ENCODE measurements at regions of chr9 and their contacts with region 1.

Region 1: GRCh38 chr9:89602978-89603766 is 1.6 kb upstream of the GADD45G start:
- DNase-seq: peak; percentile 32
- ATAC-seq: peak; percentile 76
- H3K4me3 ChIP-seq: peak overlapping the region; percentile 45; the same call in 1 of the 2 replicates
- H3K27ac ChIP-seq: no peak overlapping the region
- H3K4me1 ChIP-seq: peaks cover 25% of the 10 kb centered on the region
- H3K27me3 ChIP-seq: peaks cover 8 to 16% of the 10 kb centered on the region in 2 experiments
- CTCF ChIP-seq: peak; percentile 93 to 95 (median 93)
- EP300 ChIP-seq: no peak
- POLR2A ChIP-seq: no peak
- RAD21 ChIP-seq: peak; percentile 100

Region 2: DNA sequence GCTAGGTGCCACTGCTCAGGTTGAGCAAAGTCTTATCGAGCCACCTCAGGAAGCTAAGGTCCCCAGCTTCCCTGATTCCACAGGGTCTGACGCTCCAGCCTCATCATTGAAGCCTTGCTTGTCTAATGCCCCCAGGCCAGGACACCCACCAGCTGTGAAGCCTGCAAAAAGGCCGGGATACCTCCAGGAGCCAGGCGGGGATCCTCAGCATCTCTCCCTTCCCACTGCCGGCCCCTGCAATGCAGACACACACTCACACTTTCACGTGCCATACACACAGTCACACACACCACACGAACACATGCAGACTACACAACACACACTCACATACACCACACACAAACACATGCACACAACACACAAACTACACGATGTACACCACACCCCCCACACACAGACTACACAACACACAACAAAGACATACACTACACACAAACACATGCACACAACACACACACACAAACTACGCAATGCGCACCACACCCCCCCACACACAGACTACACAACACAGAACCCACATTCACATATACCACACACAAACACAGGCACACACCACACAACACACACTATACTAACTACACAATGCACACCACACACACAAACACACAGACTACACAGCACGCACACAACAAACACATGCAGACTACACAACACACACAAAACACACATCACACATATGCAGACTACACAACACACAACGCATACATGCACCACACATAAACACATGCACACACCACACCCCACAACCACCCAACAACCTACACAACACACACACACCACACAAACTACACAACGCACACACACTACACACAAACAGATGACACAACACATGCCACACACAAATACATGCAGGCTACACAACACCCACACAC is 629.7 kb before region 1 on chr9:
- CTCF ChIA-PET with region 1: no interaction called
- POLR2A ChIA-PET with region 1: no interaction called
- RAD21 ChIA-PET with region 1: no interaction called
- SMC1A ChIA-PET with region 1: no interaction called
- in situ Hi-C with region 1: no loop called
- intact Hi-C with region 1: no loop called
- DNase-seq: no peak
- ATAC-seq: no peak
- H3K4me3 ChIP-seq: no peak overlapping the region
- H3K27ac ChIP-seq: no peak overlapping the region
- H3K4me1 ChIP-seq: no peaks in the 10 kb centered on the region
- H3K27me3 ChIP-seq: no peaks in the 10 kb centered on the region; a peak in 1 of 4 replicates
- CTCF ChIP-seq: no peak
- EP300 ChIP-seq: no peak
- POLR2A ChIP-seq: no peak
- RAD21 ChIP-seq: no peak

Region 3: GRCh38 chr9:89466451-89467277 is 136.5 kb before region 1 on chr9:
- CTCF ChIA-PET with region 1: no interaction called
- POLR2A ChIA-PET with region 1: no interaction called
- RAD21 ChIA-PET with region 1: no interaction called
- SMC1A ChIA-PET with region 1: no interaction called
- in situ Hi-C with region 1: no loop called
- intact Hi-C with region 1: no loop called
- DNase-seq: peak; percentile 83
- ATAC-seq: peak; percentile 74
- H3K4me3 ChIP-seq: peak overlapping the region; percentile 55; the same call in 1 of the 2 replicates
- H3K27ac ChIP-seq: peak overlapping the region; percentile 99
- H3K4me1 ChIP-seq: peaks cover 88% of the 10 kb centered on the region
- H3K27me3 ChIP-seq: no peaks in the 10 kb centered on the region
- CTCF ChIP-seq: no peak
- EP300 ChIP-seq: peak; percentile 42 to 48; a peak in 1 of 4 replicates
- POLR2A ChIP-seq: 0 out of 2 replicates have a peak, but pooled peaks have one; percentile 31
- RAD21 ChIP-seq: no peak

Region 4: DNA sequence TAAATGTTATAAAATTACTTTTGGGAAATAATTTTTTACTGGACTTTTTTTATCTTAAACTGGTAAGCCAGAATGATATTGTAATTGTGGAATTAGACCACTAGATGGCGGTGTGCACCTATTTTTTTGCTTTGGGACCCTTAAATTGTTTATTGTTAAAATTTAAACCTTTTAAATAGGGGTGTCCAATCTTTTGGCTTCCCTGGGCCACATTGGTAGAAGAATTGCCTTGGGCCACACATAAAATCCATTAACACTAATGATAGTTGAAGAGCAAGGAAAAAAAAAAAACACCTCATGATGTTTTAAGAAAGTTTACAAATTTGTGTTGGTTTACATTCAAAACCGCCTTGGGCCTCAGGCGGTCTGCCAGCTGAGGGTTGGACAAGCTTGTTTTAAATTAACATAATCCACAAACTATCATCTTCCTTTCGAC is 26.8 kb before region 1 on chr9:
- CTCF ChIA-PET with region 1: interaction called, 21 read pairs
- POLR2A ChIA-PET with region 1: no interaction called
- RAD21 ChIA-PET with region 1: interaction called, 9 read pairs
- SMC1A ChIA-PET with region 1: interaction called, 24 read pairs
- in situ Hi-C with region 1: no loop called
- intact Hi-C with region 1: no loop called
- DNase-seq: no peak
- ATAC-seq: no peak
- H3K4me3 ChIP-seq: no peak overlapping the region
- H3K27ac ChIP-seq: no peak overlapping the region
- H3K4me1 ChIP-seq: no peaks in the 10 kb centered on the region
- H3K27me3 ChIP-seq: no peaks in the 10 kb centered on the region; a peak in 2 of 4 replicates
- CTCF ChIP-seq: peak; percentile 34 to 58 (median 49); a peak in 5 of 6 replicates
- EP300 ChIP-seq: no peak
- POLR2A ChIP-seq: no peak
- RAD21 ChIP-seq: peak; percentile 63

Region 5: DNA sequence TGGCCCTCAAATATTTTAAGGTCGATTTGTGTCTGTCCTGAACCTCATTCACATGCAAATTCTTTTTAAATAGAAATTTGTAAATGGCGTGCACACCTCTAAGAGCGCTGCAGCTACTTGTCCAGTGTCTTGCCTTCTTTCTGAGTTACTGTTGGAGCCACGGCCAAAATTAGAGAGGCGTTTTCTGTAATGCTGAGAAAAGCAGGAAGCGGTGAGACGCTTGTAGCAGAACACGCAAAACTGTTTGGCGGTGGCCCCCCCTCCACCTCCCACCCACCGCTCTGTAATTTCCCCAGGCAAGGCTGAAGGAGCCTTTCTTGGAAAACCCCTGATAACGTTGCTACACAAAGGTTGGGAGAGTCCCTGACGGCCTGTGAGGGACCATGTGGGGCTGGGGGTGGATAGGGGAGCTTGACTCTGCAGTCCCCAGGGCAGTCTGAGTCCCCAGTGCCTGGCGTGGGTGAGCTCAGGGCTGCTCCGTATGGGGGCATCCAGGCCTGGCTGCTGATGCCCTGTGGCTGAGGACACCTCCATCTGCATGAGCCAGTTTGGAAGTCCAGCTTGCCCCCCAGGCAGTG is 98.1 kb after region 1 on chr9:
- CTCF ChIA-PET with region 1: interaction called, 8 read pairs
- POLR2A ChIA-PET with region 1: no interaction called
- RAD21 ChIA-PET with region 1: interaction called, 20 read pairs
- SMC1A ChIA-PET with region 1: interaction called, 4 read pairs
- in situ Hi-C with region 1: no loop called
- intact Hi-C with region 1: no loop called
- DNase-seq: peak; percentile 73
- ATAC-seq: peak; percentile 95
- H3K4me3 ChIP-seq: peak overlapping the region; percentile 41
- H3K27ac ChIP-seq: peak overlapping the region; percentile 83
- H3K4me1 ChIP-seq: peaks cover 20% of the 10 kb centered on the region
- H3K27me3 ChIP-seq: no peaks in the 10 kb centered on the region
- CTCF ChIP-seq: no peak
- EP300 ChIP-seq: peak; percentile 27 to 91; a peak in 2 of 4 replicates
- POLR2A ChIP-seq: peak; percentile 86
- RAD21 ChIP-seq: no peak

Region 6: DNA sequence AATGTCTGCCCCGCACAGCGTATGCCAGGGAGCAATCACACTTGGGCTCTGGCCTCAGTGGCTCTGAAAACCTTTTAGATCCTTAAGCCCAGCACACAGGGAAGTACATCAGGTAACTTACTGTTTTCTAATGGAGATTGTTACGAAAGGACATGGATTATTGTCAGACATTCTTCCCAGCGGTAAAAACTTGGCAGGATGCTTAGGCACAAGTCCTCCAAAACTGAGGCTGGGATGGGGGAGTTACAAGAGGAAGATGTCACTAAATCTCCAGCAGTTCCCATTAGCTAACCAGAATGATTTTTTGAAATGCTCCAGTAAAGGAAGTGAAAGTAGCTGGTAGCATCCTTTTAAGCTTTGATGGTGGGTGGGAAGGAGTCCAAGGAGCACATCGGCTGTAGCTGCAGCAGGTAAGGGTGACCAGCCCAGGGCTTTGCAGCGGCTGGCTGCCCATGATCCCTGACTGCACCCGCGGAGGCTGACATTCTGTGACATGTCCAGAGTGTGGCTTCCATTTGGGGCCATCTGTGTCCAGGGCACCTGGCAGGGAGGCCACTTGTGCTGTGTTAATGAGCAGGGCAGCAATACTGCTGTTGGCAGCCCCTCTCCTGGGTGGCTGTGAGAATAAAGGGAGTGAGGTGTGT is 167.5 kb after region 1 on chr9:
- CTCF ChIA-PET with region 1: no interaction called
- POLR2A ChIA-PET with region 1: no interaction called
- RAD21 ChIA-PET with region 1: no interaction called
- SMC1A ChIA-PET with region 1: interaction called, 3 read pairs
- in situ Hi-C with region 1: no loop called
- intact Hi-C with region 1: loop called (anchors 10 kb)
- DNase-seq: no peak
- ATAC-seq: peak; percentile 39
- H3K4me3 ChIP-seq: no peak overlapping the region
- H3K27ac ChIP-seq: no peak overlapping the region
- H3K4me1 ChIP-seq: no peaks in the 10 kb centered on the region
- H3K27me3 ChIP-seq: no peaks in the 10 kb centered on the region
- CTCF ChIP-seq: no peak
- EP300 ChIP-seq: no peak
- POLR2A ChIP-seq: no peak
- RAD21 ChIP-seq: no peak

Region 7: GRCh38 chr9:89919169-89919681 is 316.1 kb after region 1 on chr9:
- CTCF ChIA-PET with region 1: interaction called, 36 read pairs
- POLR2A ChIA-PET with region 1: no interaction called
- RAD21 ChIA-PET with region 1: interaction called, 30 read pairs
- SMC1A ChIA-PET with region 1: interaction called, 6 read pairs
- in situ Hi-C with region 1: loop called (anchors 10 kb)
- intact Hi-C with region 1: loop called (anchors 1 kb)
- DNase-seq: peak; percentile 12
- ATAC-seq: peak; percentile 93
- H3K4me3 ChIP-seq: no peak overlapping the region
- H3K27ac ChIP-seq: no peak overlapping the region
- H3K4me1 ChIP-seq: no peaks in the 10 kb centered on the region
- H3K27me3 ChIP-seq: peaks cover 0 to 1% of the 10 kb centered on the region in 2 experiments; a peak in 3 of 4 replicates
- CTCF ChIP-seq: peak; percentile 45 to 80 (median 63); a peak in 4 of 6 replicates
- EP300 ChIP-seq: no peak
- POLR2A ChIP-seq: no peak
- RAD21 ChIP-seq: peak; percentile 80

Region 8: GRCh38 chr9:89999534-90000370 is 396.6 kb after region 1 on chr9:
- CTCF ChIA-PET with region 1: interaction called, 7 read pairs
- POLR2A ChIA-PET with region 1: no interaction called
- RAD21 ChIA-PET with region 1: interaction called, 16 read pairs
- SMC1A ChIA-PET with region 1: interaction called, 11 read pairs
- in situ Hi-C with region 1: no loop called
- intact Hi-C with region 1: no loop called
- DNase-seq: peak; percentile 61
- ATAC-seq: peak; percentile 95
- H3K4me3 ChIP-seq: peak overlapping the region; percentile 56; the same call in 1 of the 2 replicates
- H3K27ac ChIP-seq: peak overlapping the region; percentile 62
- H3K4me1 ChIP-seq: peaks cover 12% of the 10 kb centered on the region
- H3K27me3 ChIP-seq: no peaks in the 10 kb centered on the region
- CTCF ChIP-seq: no peak
- EP300 ChIP-seq: no peak
- POLR2A ChIP-seq: peak; percentile 71
- RAD21 ChIP-seq: no peak

Region 9: DNA sequence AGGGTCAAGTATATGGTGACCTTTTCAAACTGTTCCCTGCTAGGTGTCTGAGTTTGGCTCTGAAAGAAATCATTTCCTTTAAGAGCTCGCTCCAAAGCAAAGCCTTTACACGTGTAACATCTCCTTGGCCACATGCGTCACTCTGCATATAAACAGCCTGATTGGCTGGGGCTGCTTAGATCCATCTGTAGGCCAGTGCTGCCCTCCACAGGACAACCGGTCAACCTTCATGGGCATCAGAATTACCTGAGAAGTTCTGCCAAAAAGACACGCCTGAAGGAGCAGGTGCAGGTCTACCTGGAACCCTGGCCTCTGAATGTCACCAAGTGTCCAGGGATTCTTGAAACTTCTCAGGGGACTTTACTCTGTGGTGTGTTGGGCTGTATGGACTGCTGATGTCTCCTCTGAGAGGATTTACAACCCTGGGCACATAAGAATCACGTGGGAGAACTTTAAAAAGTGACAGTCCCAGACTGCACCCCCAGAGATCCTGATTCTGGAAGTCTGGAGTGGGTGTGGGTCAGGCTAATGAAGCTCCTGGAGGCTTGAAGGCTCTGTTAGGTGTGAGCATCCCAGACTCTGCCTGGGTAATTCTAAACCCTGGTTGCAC is 499.2 kb after region 1 on chr9:
- CTCF ChIA-PET with region 1: interaction called, 282 read pairs
- POLR2A ChIA-PET with region 1: interaction called, 4 read pairs
- RAD21 ChIA-PET with region 1: interaction called, 125 read pairs
- SMC1A ChIA-PET with region 1: interaction called, 89 read pairs
- in situ Hi-C with region 1: loop called (anchors 5 kb)
- intact Hi-C with region 1: loop called (anchors 1 kb)
- DNase-seq: peak; percentile 36
- ATAC-seq: peak; percentile 100
- H3K4me3 ChIP-seq: no peak overlapping the region
- H3K27ac ChIP-seq: no peak overlapping the region
- H3K4me1 ChIP-seq: no peaks in the 10 kb centered on the region
- H3K27me3 ChIP-seq: no peaks in the 10 kb centered on the region; a peak in 2 of 4 replicates
- CTCF ChIP-seq: peak; percentile 72 to 83 (median 81); a peak in 5 of 6 replicates
- EP300 ChIP-seq: no peak
- POLR2A ChIP-seq: no peak
- RAD21 ChIP-seq: peak; percentile 91

Measured in GM12878 (cell line).